ENCODE measurements at regions of chr22 and their contacts with region 1.

Region 1: DNA sequence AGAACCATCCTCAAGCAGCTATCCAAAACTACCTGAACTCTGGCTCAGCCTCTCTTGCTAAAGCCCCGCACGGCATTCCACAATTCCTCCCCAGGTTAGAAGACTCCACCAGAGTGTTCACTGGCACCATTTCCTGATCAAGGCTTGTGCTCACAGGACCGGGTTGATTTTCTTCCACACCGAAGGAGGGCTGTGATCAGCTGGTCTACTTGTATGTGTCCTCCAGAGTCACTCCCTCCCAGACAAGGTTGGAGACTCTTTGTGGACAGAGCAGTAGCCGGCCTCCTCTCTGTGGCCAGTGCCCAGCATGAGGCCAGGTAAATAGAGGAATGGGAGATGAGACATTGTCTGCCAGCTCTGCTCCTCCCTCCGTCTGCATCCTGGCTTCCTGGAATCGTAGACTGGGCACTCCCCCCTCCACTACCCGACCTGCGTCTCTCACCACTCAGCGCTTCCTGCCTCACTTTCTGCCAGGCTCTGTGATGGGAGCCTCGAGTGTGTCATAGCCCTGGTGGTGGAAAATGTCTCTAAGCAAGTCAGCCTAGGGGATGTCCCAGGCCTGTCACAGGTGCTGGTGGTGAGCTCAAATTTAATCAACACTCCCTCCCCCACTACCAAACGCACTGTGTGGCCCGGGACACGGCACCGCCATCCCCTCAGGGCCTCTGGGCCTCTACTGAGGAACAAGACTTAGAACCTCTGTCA is 12.5 kb upstream of the TMPRSS6 start:
- DNase-seq: peak; percentile 73 to 96 (median 93)
- ATAC-seq: peak; percentile 98
- H3K4me3 Mint-ChIP-seq: peak overlapping the region; percentile 60 to 91 (median 84)
- H3K27ac Mint-ChIP-seq: peak overlapping the region; percentile 97 to 100 (median 98)
- H3K4me1 Mint-ChIP-seq: peaks cover 18 to 66% (median 59%) of the 10 kb centered on the region in 4 donors
- H3K27me3 Mint-ChIP-seq: no peaks in the 10 kb centered on the region

Region 2: GRCh38 chr22:36977947-36978660 is 143.9 kb before region 1 on chr22:
- POLR2A ChIA-PET with region 1: no interaction called
- DNase-seq: peak; percentile 84 to 94 (median 88)
- ATAC-seq: peak; percentile 75 to 76
- H3K4me3 Mint-ChIP-seq: peak overlapping the region; percentile 88 to 99 (median 94)
- H3K27ac Mint-ChIP-seq: peak overlapping the region; percentile 91 to 99 (median 96)
- H3K4me1 Mint-ChIP-seq: peaks cover 7 to 16% (median 10%) of the 10 kb centered on the region in 4 donors
- H3K27me3 Mint-ChIP-seq: peaks cover 0 to 12% (median 3%) of the 10 kb centered on the region in 5 donors

Region 3: DNA sequence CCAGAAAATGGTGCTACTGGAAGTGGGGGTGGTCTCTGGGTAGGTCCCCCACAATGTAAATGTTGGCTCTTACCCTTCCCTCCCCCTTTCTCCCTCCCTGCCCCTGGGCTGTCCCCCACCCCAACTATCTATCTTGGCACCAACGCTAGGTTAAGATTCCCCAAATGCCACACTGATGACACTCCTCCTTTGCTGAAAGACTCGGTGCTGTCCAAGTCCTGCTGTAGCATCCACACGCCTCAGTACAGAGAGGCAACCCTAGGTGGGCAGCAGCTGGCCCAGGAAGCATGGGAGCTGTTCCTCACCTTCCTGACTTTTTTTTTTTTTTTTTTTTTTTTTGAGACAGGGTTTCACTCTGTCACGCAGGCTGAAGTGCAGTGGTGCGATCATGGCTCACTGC is 73.9 kb before region 1 on chr22:
- POLR2A ChIA-PET with region 1: interaction called, 10 read pairs
- DNase-seq: no peak
- ATAC-seq: no peak
- H3K4me3 Mint-ChIP-seq: no peak overlapping the region
- H3K27ac Mint-ChIP-seq: no peak overlapping the region
- H3K4me1 Mint-ChIP-seq: peaks cover 5 to 18% (median 10%) of the 10 kb centered on the region in 4 donors
- H3K27me3 Mint-ChIP-seq: peaks cover 0 to 3% (median 0%) of the 10 kb centered on the region in 5 donors

Region 4: GRCh38 chr22:37148742-37149665 is 27.0 kb after region 1 on chr22:
- POLR2A ChIA-PET with region 1: interaction called, 104 read pairs
- DNase-seq: peak in 1 of 10 donors; percentile 51
- ATAC-seq: peak in 1 of 2 donors; percentile 17
- H3K4me3 Mint-ChIP-seq: peak overlapping the region; percentile 89 to 94 (median 90)
- H3K27ac Mint-ChIP-seq: peak overlapping the region; percentile 96 to 99 (median 98)
- H3K4me1 Mint-ChIP-seq: peaks cover 40 to 78% (median 65%) of the 10 kb centered on the region in 4 donors
- H3K27me3 Mint-ChIP-seq: no peaks in the 10 kb centered on the region

Region 5: GRCh38 chr22:37193629-37194191 is 71.7 kb after region 1 on chr22:
- POLR2A ChIA-PET with region 1: interaction called, 11 read pairs
- DNase-seq: peak in 8 of 10 donors; percentile 32 to 66 (median 46)
- ATAC-seq: peak; percentile 46 to 60
- H3K4me3 Mint-ChIP-seq: peak overlapping the region; percentile 37 to 79 (median 70)
- H3K27ac Mint-ChIP-seq: peak overlapping the region; percentile 82 to 96 (median 92)
- H3K4me1 Mint-ChIP-seq: peaks cover 18 to 71% (median 67%) of the 10 kb centered on the region in 4 donors
- H3K27me3 Mint-ChIP-seq: no peaks in the 10 kb centered on the region